Activated T-helper 2 cell treated with anti-CD3 and anti-CD28 coated beads, Interferon-gamma antibody, Interleukin-2, Interleukin-4, amounts not matched to agents 10 μg/mL and 5 μg/mL and 100 μg/mL, durations not matched to agents 14 hours and 24 hours and 36 hours (primary cell): ENCODE measurements at regions of chr6 and their contacts with region 1.

Region 1: GRCh38 chr6:12119085-12119588 is 107.0 kb downstream of the HIVEP1 start:
- DNase-seq: peak; percentile 61
- H3K4me3 Mint-ChIP-seq: peak overlapping the region; percentile 11
- H3K27ac Mint-ChIP-seq: peak overlapping the region; percentile 75
- H3K4me1 Mint-ChIP-seq: peaks cover 47% of the 10 kb centered on the region
- H3K27me3 Mint-ChIP-seq: no peaks in the 10 kb centered on the region

Region 2: GRCh38 chr6:12051861-12052368 is 67.2 kb before region 1 on chr6:
- intact Hi-C with region 1: loop called (anchors 2 kb)
- DNase-seq: peak; percentile 70
- H3K4me3 Mint-ChIP-seq: peak overlapping the region; percentile 59
- H3K27ac Mint-ChIP-seq: peak overlapping the region; percentile 91
- H3K4me1 Mint-ChIP-seq: peaks cover 69% of the 10 kb centered on the region
- H3K27me3 Mint-ChIP-seq: no peaks in the 10 kb centered on the region

Region 3: DNA sequence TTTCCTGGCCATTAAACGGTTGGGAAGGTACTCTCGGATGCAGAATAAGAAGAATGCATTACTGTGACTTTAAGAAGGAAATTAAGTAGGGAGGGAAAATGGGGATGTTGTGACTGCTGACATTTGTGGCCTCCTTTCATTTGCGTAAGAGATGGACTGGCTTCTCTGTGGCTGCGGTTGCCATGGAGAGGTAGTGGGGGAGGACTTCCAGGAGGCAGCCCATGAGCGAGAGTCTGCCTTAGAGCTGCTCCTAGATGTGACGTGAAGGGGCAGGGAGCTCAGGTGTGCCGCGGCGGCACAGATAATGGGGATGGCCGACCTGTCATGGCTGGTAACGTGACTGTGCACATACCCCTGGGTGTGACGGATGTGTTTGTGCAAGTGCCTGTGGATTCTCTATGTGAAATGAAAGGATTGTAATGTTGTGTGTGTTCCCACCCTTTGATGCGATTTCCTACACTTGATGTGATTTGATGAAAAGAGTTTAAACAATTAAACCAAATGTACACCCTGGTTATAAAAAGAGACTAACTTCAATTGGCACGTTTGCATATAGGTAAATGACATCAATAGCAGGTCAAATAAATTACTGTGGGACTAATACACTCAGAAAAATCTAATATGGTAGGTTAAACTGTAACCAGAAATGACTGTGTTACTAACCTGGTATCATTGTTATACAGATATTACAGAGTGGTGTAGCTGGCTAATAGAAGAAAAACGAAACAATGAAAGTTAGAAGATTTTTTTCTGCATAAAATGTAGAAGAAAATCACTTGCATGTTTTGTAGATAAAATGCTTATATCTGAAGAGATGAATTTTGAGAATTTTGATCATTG is 58.1 kb before region 1 on chr6:
- intact Hi-C with region 1: loop called (anchors 1 kb)
- DNase-seq: peak; percentile 71
- H3K4me3 Mint-ChIP-seq: peak overlapping the region; percentile 80
- H3K27ac Mint-ChIP-seq: peak overlapping the region; percentile 88
- H3K4me1 Mint-ChIP-seq: peaks cover 71% of the 10 kb centered on the region
- H3K27me3 Mint-ChIP-seq: no peaks in the 10 kb centered on the region